Esophagus muscularis mucosa (tissue), 4 donors: ENCODE measurements at regions of chr2 and their contacts with region 1.

Region 1: DNA sequence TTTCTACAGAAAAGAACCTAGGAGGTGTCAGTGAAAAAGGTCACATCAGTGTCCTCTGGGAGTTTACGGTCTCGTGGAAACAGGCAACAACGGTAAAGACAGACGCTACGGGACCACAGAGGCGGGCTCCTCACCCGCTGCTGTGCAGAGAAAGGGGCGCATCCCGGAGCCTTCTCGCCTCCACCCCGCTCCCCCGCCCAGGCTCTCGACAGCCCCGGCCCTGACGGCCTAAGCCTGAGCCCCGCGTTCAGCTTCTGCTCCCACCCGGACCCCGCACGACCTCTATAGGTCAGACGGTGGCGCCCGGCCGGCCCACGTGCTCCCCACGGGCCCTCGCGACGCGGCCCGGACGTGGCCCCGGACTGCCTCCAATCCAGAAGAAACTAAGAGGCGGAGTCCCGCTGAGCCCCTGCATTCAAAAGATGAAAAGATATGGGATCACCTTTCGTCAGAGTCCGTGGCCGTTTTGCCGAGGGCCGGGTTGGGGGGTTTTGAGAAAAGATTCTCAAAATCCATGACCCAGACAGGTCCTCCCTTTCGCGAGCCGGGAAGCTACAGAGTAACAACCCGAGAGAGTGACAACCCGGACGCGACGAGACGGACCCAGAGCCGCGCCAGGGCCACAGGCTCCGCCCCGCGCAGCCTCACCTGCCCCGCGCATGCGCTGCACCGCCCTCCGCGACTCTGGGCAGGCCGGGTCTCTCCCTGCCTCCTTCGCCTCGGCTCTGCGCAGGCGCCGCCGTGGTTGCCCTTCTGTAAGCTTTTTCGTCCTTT is at the start of gene ZC3H8:
- DNase-seq: peak; percentile 95
- H3K4me3 ChIP-seq: peak within 1 kb of the TSS; percentile 62 to 80 (median 74)
- H3K27ac ChIP-seq: peak within 1 kb of the TSS; percentile 74 to 85 (median 80)
- H3K4me1 ChIP-seq: peaks cover 4 to 26% (median 22%) of the 10 kb centered on the region in 4 donors
- H3K27me3 ChIP-seq: no peaks in the 10 kb centered on the region
- CTCF ChIP-seq: no peak
- EP300 ChIP-seq: no peak
- POLR2A ChIP-seq: peak; percentile 59
- total RNA-seq, gene ZC3H8: 3.7 to 8.6 (median 5.7) TPM

Region 2: GRCh38 chr2:112054847-112055729 is 199.6 kb before region 1 on chr2 and contains the start of gene TMEM87B:
- intact Hi-C with region 1: loop called (anchors 10 kb)
- DNase-seq: peak; percentile 100
- H3K4me3 ChIP-seq: peak within 1 kb of the TSS; percentile 71 to 88 (median 79)
- H3K27ac ChIP-seq: peak within 1 kb of the TSS; percentile 92 to 99 (median 95)
- H3K4me1 ChIP-seq: peaks cover 28 to 42% (median 34%) of the 10 kb centered on the region in 4 donors
- H3K27me3 ChIP-seq: no peaks in the 10 kb centered on the region
- CTCF ChIP-seq: no peak
- EP300 ChIP-seq: no peak
- POLR2A ChIP-seq: peak; percentile 40
- total RNA-seq, gene TMEM87B: 13.7 to 21.8 (median 14.9) TPM